CD4-positive, alpha-beta T cell (primary cell): ENCODE measurements at regions of chr3 and their contacts with region 1.

Region 1: DNA sequence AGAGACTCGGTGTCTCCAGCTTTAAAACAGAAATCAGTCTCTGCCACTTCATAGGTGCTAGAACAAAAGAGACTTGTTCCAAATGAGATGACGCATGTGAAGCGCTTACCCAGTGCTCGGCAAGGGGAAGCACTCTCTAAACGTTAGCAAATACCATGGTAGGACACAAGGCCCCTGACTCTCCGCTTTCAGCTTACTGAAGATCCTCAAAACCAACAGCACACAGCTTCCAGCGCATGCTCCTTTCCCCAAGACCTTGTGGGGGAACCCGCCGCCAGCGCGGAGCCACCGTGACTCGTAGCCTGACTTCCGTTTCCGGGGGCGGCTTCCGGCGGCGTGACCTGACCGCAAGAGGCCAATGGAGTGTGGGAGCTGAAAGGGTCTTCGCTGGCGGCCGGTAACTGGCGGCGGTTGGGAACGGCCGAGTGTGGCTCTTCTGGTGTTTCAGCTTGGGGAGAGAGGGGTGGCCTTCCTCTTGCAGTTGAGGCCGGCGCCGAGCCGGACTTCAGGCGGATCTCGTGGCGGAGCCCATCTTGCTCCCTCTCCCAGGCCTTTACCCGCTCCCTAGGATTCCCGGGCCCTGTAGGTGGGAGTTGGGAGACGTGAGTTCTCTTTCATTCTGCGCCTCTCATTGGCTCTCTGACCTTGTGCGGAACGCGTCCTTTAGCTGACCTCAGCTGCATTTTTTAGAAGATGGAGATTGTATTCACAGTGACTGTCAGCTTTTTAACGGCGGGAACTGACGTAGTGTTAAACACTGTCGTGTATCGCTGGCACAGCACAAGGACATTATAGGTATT is at the start of gene THUMPD3:
- DNase-seq: peak; percentile 82 to 95 (median 86)
- ATAC-seq: peak; percentile 91
- H3K4me3 ChIP-seq: peak within 1 kb of the TSS; percentile 88
- H3K4me3 Mint-ChIP-seq: peak within 1 kb of the TSS; percentile 96
- H3K27ac ChIP-seq: peak within 1 kb of the TSS; percentile 92 to 94
- H3K27ac Mint-ChIP-seq: peak within 1 kb of the TSS; percentile 99
- H3K4me1 ChIP-seq: peaks cover 20% of the 10 kb centered on the region
- H3K4me1 Mint-ChIP-seq: peaks cover 25% of the 10 kb centered on the region
- H3K27me3 ChIP-seq: no peaks in the 10 kb centered on the region
- H3K27me3 Mint-ChIP-seq: no peaks in the 10 kb centered on the region
- CTCF ChIP-seq: peak; percentile 13
- total RNA-seq, gene THUMPD3: 74.2 to 78.0 TPM

Region 2: GRCh38 chr3:8963137-8963869 is 399.6 kb before region 1 on chr3 and contains the start of gene RAD18:
- CTCF ChIA-PET with region 1: no interaction called
- POLR2A ChIA-PET with region 1: interaction called, 10 read pairs
- intact Hi-C with region 1: loop called in 1 of 2 experiments (anchors 5 kb)
- DNase-seq: peak; percentile 87 to 96 (median 90)
- ATAC-seq: peak; percentile 93
- H3K4me3 ChIP-seq: peak within 1 kb of the TSS; percentile 88
- H3K4me3 Mint-ChIP-seq: peak within 1 kb of the TSS; percentile 97
- H3K27ac ChIP-seq: peak within 1 kb of the TSS; percentile 80 to 92
- H3K27ac Mint-ChIP-seq: peak within 1 kb of the TSS; percentile 95
- H3K4me1 ChIP-seq: peaks cover 15% of the 10 kb centered on the region
- H3K4me1 Mint-ChIP-seq: peaks cover 43% of the 10 kb centered on the region
- H3K27me3 ChIP-seq: no peaks in the 10 kb centered on the region
- H3K27me3 Mint-ChIP-seq: peaks cover 1% of the 10 kb centered on the region
- CTCF ChIP-seq: no peak
- total RNA-seq, gene RAD18: 9.6 to 10.0 TPM

Region 3: GRCh38 chr3:9373465-9373864 is 10.5 kb after region 1 on chr3:
- CTCF ChIA-PET with region 1: no interaction called
- POLR2A ChIA-PET with region 1: interaction called, 22 read pairs
- intact Hi-C with region 1: no loop called
- DNase-seq: no peak
- ATAC-seq: no peak
- H3K4me3 ChIP-seq: no peak overlapping the region
- H3K4me3 Mint-ChIP-seq: no peak overlapping the region
- H3K27ac ChIP-seq: no peak overlapping the region
- H3K27ac Mint-ChIP-seq: peak overlapping the region; percentile 39
- H3K4me1 ChIP-seq: peaks cover 10% of the 10 kb centered on the region
- H3K4me1 Mint-ChIP-seq: peaks cover 71% of the 10 kb centered on the region
- H3K27me3 ChIP-seq: no peaks in the 10 kb centered on the region
- H3K27me3 Mint-ChIP-seq: no peaks in the 10 kb centered on the region
- CTCF ChIP-seq: no peak

Region 4: DNA sequence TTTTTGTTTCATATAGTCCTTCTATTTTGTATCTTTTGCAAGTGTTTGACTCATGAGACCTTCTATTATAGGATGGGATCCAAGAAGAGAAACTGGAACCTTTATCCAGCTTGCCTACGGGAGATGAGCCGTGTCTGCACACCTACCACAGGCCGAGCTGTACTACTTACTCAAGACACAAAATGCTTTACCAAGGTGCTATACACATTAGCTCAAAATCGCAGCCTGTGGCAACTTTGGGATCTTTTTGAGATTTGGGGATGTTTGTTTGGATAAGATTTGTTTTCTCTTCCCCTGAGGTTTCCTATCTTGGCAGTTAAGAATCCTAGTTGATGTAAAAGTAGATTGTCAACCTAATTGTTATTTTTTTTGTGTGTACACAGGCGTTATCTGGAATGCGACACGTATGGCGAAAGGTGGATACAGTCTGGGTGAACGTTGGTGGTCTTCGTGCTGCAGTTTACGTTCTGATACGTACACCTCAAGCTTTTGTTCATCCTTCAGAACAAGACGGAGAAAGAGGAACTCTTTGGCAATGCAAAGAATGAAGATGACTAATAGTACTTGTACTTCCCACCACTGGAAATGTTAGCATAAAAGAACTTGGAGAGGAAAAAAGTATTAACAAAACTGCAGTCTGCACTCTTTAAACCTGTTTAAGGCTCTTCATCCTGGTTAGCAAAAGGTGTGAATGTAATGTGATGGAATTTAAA is 21.4 kb after region 1 on chr3:
- CTCF ChIA-PET with region 1: no interaction called
- POLR2A ChIA-PET with region 1: interaction called, 22 read pairs
- intact Hi-C with region 1: no loop called
- DNase-seq: no peak
- ATAC-seq: no peak
- H3K4me3 ChIP-seq: no peak overlapping the region
- H3K4me3 Mint-ChIP-seq: no peak overlapping the region
- H3K27ac ChIP-seq: no peak overlapping the region
- H3K27ac Mint-ChIP-seq: peak overlapping the region; percentile 64
- H3K4me1 ChIP-seq: no peaks in the 10 kb centered on the region
- H3K4me1 Mint-ChIP-seq: peaks cover 16% of the 10 kb centered on the region
- H3K27me3 ChIP-seq: no peaks in the 10 kb centered on the region
- H3K27me3 Mint-ChIP-seq: no peaks in the 10 kb centered on the region
- CTCF ChIP-seq: no peak

Region 5: DNA sequence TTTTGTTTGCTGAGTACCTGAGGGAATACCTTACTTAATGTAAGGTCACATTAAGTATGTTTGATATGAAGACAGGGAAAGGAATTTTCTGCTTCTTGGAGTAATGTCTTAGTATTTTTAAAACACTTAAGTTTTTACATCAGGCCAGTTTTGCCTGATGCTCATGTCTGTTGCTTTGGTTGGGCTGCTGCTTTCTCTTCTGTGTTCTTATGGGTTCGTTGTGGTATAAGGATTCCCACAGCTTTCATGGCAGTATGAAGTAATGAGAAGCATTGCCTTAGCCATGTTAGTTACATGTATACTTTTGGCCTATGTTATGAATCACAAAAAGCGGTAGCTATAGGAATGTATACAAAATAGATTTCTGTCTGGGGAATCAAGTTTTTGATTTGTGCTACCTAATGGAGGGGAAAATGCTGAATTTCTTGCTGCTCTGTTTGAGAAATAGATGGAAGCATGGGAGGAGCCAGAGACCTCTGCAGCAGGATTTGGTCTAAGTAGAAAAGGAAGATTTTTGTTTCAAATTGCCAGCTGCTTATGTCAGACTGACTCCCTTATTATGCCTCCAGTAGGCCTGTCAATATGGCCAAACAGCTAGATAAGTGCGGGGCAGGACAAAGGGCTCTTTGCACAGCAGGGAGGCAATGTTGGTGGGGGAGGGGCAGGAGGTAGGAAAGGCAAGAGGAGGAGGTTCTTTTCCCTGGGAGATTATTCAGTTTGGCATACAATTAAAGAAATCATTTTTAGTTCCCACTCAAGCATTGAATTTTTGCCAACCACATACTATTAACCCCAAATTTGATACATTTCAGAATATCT is 39.7 kb after region 1 on chr3:
- CTCF ChIA-PET with region 1: no interaction called
- POLR2A ChIA-PET with region 1: interaction called, 209 read pairs
- intact Hi-C with region 1: loop called in 1 of 2 experiments (anchors 2 kb)
- DNase-seq: no peak
- ATAC-seq: no peak
- H3K4me3 ChIP-seq: no peak overlapping the region
- H3K4me3 Mint-ChIP-seq: peak overlapping the region; percentile 65
- H3K27ac ChIP-seq: no peak overlapping the region
- H3K27ac Mint-ChIP-seq: peak overlapping the region; percentile 65
- H3K4me1 ChIP-seq: peaks cover 30% of the 10 kb centered on the region
- H3K4me1 Mint-ChIP-seq: peaks cover 90% of the 10 kb centered on the region
- H3K27me3 ChIP-seq: no peaks in the 10 kb centered on the region
- H3K27me3 Mint-ChIP-seq: no peaks in the 10 kb centered on the region
- CTCF ChIP-seq: no peak

Region 6: GRCh38 chr3:9649791-9650521 is 287.0 kb after region 1 on chr3:
- CTCF ChIA-PET with region 1: no interaction called
- POLR2A ChIA-PET with region 1: interaction called, 19 read pairs
- intact Hi-C with region 1: loop called in 1 of 2 experiments (anchors 5 kb)
- DNase-seq: peak in 3 of 14 experiments; percentile 40 to 57 (median 53)
- ATAC-seq: no peak
- H3K4me3 ChIP-seq: peak overlapping the region; percentile 92
- H3K4me3 Mint-ChIP-seq: peak overlapping the region; percentile 96
- H3K27ac ChIP-seq: peak overlapping the region; percentile 78 to 92
- H3K27ac Mint-ChIP-seq: peak overlapping the region; percentile 87
- H3K4me1 ChIP-seq: peaks cover 36% of the 10 kb centered on the region
- H3K4me1 Mint-ChIP-seq: peaks cover 35% of the 10 kb centered on the region
- H3K27me3 ChIP-seq: no peaks in the 10 kb centered on the region
- H3K27me3 Mint-ChIP-seq: no peaks in the 10 kb centered on the region
- CTCF ChIP-seq: no peak